Endothelial cell of umbilical vein (primary cell): ENCODE measurements at regions of chr6 and their contacts with region 1.

Region 1: DNA sequence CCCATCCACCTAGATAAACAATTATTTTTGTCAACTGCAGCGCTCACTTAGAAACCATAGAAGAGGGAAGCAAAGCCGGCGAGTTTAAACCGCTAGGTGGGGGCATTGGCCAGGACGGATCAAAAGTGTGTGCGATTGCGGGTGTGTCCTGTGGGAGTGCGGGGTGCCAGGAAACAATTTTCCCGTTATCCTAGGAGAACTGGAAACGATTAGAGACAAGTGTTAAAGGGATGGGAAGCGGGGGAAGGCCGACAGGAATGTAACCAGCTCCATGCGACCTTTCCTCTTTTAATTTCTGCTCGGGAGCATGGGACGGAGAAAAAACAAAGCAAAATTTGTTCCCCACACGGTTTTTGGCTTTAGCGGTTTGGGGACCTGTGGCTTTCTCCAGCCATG is 2.8 kb upstream of the HTR1B start:
- DNase-seq: peak; percentile 77
- H3K4me3 ChIP-seq: peak overlapping the region; percentile 52 to 97 (median 81)
- H3K27ac ChIP-seq: peak overlapping the region; percentile 38
- H3K4me1 ChIP-seq: peaks cover 32% of the 10 kb centered on the region
- H3K27me3 ChIP-seq: no peaks in the 10 kb centered on the region
- CTCF ChIP-seq: peak; percentile 70 to 77
- POLR2A ChIP-seq: no peak

Region 2: DNA sequence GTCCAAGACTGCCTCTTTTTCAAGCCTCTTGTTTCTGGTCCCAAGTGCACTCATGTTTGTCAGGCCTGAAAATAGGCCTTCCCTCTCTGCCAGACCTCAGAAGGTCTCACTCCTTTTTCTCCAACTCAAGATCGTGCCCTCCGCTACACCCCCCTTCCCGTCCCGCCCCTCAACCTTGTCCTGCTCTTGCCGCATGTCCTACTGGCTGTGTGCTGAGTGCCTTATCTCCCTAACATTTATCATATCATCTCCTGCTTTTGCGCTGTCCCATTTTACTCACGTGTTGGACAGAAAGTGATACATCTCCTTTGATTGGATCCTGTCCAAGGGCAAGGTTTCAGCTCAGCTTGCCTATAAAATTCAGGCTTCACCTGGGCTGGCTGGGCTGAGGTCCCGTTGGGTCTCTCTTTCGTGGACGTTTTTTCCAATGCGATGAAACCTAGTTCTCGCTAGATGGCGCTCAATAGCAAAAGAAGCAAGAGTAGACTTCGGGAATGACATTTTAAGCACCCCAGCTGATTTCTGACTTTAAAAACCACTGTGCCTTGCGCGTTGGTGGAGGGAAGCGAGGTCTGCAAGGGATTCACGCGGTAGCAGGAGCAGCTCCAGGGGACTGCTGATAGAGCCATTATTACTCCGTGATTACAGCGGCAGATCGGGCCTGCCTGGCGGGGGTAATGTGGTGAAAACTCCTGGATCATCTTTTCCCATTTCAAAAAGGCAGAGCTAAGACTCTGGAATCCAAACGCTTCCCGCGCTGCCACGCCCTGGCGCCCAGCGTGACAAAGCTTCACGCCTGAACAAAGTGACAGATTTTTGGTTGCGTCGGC is 1531.2 kb before region 1 on chr6:
- CTCF ChIA-PET with region 1: interaction called, 105 read pairs
- POLR2A ChIA-PET with region 1: no interaction called
- dilution Hi-C with region 1: no loop called
- intact Hi-C with region 1: loop called (anchors 1 kb)
- DNase-seq: peak; percentile 77
- H3K4me3 ChIP-seq: peak overlapping the region in 2 of 3 experiments; percentile 35 to 51
- H3K27ac ChIP-seq: no peak overlapping the region
- H3K4me1 ChIP-seq: peaks cover 4% of the 10 kb centered on the region
- H3K27me3 ChIP-seq: no peaks in the 10 kb centered on the region
- CTCF ChIP-seq: peak; percentile 68 to 75
- POLR2A ChIP-seq: no peak

Region 3: DNA sequence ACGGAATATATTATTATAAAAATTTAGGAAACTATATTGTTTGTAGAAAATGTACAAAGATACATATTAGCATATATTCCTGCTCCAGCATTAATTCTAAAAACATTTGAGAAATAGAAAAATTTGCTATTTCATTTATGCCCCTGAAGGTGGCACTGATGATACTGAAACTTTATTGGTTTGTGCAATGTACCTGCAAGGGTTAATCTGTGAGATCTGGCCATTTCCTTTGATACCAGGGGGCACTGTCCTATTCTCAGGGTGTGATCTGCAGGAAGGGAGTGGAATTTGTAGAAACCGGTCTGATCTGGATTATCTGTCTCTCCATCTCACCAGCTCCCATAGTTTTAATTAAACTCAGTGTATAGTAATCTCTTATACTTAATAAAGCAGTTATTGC is 768.5 kb before region 1 on chr6:
- CTCF ChIA-PET with region 1: interaction called, 13 read pairs
- POLR2A ChIA-PET with region 1: no interaction called
- dilution Hi-C with region 1: no loop called
- intact Hi-C with region 1: loop called (anchors 1 kb)
- DNase-seq: peak; percentile 64
- H3K4me3 ChIP-seq: no peak overlapping the region
- H3K27ac ChIP-seq: no peak overlapping the region
- H3K4me1 ChIP-seq: peaks cover 9% of the 10 kb centered on the region
- H3K27me3 ChIP-seq: no peaks in the 10 kb centered on the region
- CTCF ChIP-seq: peak; percentile 18 to 30
- POLR2A ChIP-seq: no peak

Region 4: GRCh38 chr6:77447254-77447653 is 18.8 kb before region 1 on chr6:
- CTCF ChIA-PET with region 1: interaction called, 12 read pairs
- POLR2A ChIA-PET with region 1: interaction called, 3 read pairs
- dilution Hi-C with region 1: no loop called
- intact Hi-C with region 1: no loop called
- DNase-seq: peak; percentile 78
- H3K4me3 ChIP-seq: no peak overlapping the region
- H3K27ac ChIP-seq: peak overlapping the region; percentile 30
- H3K4me1 ChIP-seq: peaks cover 15% of the 10 kb centered on the region
- H3K27me3 ChIP-seq: no peaks in the 10 kb centered on the region
- CTCF ChIP-seq: no peak
- POLR2A ChIP-seq: no peak

Region 5: DNA sequence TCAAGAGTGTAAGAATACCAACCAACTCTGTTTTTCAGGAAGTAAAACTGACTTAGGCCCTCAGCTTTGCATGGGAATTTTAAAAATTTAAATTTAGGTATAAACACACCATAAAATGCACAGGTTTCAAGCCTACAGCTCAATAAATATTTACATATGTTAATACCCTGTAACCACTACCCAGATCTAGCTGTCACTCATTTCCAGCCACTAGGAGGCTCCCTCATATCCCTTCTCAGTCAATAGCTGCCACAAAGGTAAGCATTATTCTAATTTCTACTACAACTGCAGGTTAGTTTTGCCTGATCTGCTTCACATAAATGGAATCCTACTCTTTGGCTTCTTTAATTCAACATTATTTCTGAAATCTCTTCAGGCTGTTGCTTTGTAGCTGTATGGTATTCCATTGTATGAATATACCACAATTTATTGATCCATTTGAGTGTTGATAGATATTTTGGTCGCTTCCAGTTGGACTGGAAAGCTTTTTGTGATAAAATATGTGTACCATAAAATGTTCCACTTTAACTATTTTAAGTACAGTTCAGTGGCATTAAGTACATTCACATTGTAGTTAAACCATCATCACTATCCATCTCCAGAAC is 154.3 kb after region 1 on chr6:
- CTCF ChIA-PET with region 1: interaction called, 21 read pairs
- POLR2A ChIA-PET with region 1: no interaction called
- dilution Hi-C with region 1: no loop called
- intact Hi-C with region 1: no loop called
- DNase-seq: peak; percentile 38
- H3K4me3 ChIP-seq: no peak overlapping the region
- H3K27ac ChIP-seq: no peak overlapping the region
- H3K4me1 ChIP-seq: no peaks in the 10 kb centered on the region
- H3K27me3 ChIP-seq: no peaks in the 10 kb centered on the region
- CTCF ChIP-seq: peak; percentile 47 to 67
- POLR2A ChIP-seq: no peak

Region 6: DNA sequence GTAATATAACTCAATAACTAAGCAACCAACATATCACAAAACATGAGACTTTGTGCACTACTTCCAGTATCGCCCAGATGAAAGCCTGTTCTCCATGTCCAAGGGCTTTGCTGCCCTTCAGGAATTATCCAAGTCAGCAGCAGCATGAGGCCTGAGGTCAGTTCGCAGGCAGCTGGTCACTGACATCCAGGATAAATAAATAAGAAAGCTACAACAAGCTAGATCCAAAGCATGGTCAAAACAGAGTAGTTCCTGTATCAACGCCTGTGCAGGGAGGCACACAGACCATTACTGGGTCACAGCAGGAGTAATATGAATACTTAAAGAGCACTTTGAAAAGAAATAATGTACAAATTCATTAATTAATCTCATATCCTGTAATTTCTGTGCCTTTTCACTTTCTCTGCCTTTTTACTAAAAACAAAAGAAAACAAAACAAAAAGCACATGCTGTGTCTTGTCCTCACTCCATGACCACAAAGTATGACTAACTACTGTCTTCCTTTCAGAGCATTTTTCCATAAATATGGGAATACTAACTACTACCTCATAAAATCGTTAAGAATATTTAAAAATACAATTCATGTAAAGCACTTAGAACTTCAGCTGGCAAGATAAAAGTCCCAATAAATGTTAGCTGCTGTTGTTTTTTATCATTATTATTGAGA is 1026.4 kb after region 1 on chr6:
- CTCF ChIA-PET with region 1: interaction called, 3 read pairs
- POLR2A ChIA-PET with region 1: no interaction called
- dilution Hi-C with region 1: no loop called
- intact Hi-C with region 1: loop called (anchors 10 kb)
- DNase-seq: peak; percentile 82
- H3K4me3 ChIP-seq: peak overlapping the region in 1 of 3 experiments; percentile 19
- H3K27ac ChIP-seq: peak overlapping the region; percentile 63
- H3K4me1 ChIP-seq: peaks cover 53% of the 10 kb centered on the region
- H3K27me3 ChIP-seq: no peaks in the 10 kb centered on the region
- CTCF ChIP-seq: no peak
- POLR2A ChIP-seq: no peak

Region 7: GRCh38 chr6:79466207-79466834 is 2000.3 kb after region 1 on chr6:
- CTCF ChIA-PET with region 1: no interaction called
- POLR2A ChIA-PET with region 1: no interaction called
- dilution Hi-C with region 1: no loop called
- intact Hi-C with region 1: loop called (anchors 10 kb)
- DNase-seq: peak; percentile 59
- H3K4me3 ChIP-seq: no peak overlapping the region
- H3K27ac ChIP-seq: no peak overlapping the region
- H3K4me1 ChIP-seq: peaks cover 7% of the 10 kb centered on the region
- H3K27me3 ChIP-seq: no peaks in the 10 kb centered on the region
- CTCF ChIP-seq: peak; percentile 27 to 33
- POLR2A ChIP-seq: no peak